Tibial artery (tissue), 4 donors: ENCODE measurements at regions of chr5 and their contacts with region 1.

Region 1: GRCh38 chr5:156951359-156951758 is 11.7 kb downstream of the TIMD4 start:
- DNase-seq: no peak
- H3K4me3 ChIP-seq: no peak overlapping the region
- H3K27ac ChIP-seq: no peak overlapping the region
- H3K4me1 ChIP-seq: no peaks in the 10 kb centered on the region
- H3K27me3 ChIP-seq: no peaks in the 10 kb centered on the region
- CTCF ChIP-seq: no peak

Region 2: GRCh38 chr5:156715287-156715686 is 236.1 kb before region 1 on chr5:
- intact Hi-C with region 1: no loop called
- DNase-seq: no peak
- H3K4me3 ChIP-seq: no peak overlapping the region
- H3K27ac ChIP-seq: no peak overlapping the region
- H3K4me1 ChIP-seq: no peaks in the 10 kb centered on the region
- H3K27me3 ChIP-seq: no peaks in the 10 kb centered on the region
- CTCF ChIP-seq: no peak

Region 3: DNA sequence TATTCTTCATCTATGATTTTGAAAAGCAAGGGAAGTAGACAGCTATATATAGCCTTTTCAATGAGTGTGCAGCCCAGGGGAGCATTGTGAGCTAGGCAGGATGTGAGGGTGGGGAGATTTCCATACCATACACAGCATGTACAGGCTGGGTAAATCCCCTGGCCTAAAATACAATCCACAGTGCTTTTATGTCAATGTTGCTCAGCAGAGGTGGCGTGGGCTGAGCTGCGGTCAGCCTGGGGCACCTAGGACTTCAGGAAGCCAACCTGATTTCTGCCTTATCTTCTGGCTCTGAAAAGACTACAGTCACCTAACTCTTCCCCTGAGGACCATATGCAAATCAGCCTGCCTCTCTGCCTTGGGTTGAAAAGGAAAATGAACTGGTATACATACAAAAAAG is 221.0 kb after region 1 on chr5:
- intact Hi-C with region 1: no loop called
- DNase-seq: no peak
- H3K4me3 ChIP-seq: no peak overlapping the region
- H3K27ac ChIP-seq: no peak overlapping the region
- H3K4me1 ChIP-seq: no peaks in the 10 kb centered on the region
- H3K27me3 ChIP-seq: no peaks in the 10 kb centered on the region
- CTCF ChIP-seq: no peak

Region 4: GRCh38 chr5:157710872-157711271 is 759.5 kb after region 1 on chr5:
- intact Hi-C with region 1: loop called (anchors 5 kb)
- DNase-seq: no peak
- H3K4me3 ChIP-seq: no peak overlapping the region
- H3K27ac ChIP-seq: no peak overlapping the region
- H3K4me1 ChIP-seq: peaks cover 0 to 17% (median 4%) of the 10 kb centered on the region in 4 donors
- H3K27me3 ChIP-seq: no peaks in the 10 kb centered on the region
- CTCF ChIP-seq: no peak